ENCODE measurements at regions of chr1 and their contacts with region 1.

Region 1: GRCh38 chr1:149886396-149887195 is 12.8 kb upstream of the BOLA1 start:
- H3K4me3 ChIP-seq: peak overlapping the region; percentile 64
- H3K27ac ChIP-seq: peak overlapping the region; percentile 68
- H3K4me1 ChIP-seq: 0 out of 2 replicates have a peak, but pooled peaks cover 2% of the 10 kb centered on the region
- CTCF ChIP-seq: no peak

Region 2: GRCh38 chr1:149899460-149900293 is 13.1 kb after region 1 on chr1 and contains the start of gene BOLA1:
- CTCF ChIA-PET with region 1: interaction called, 3 read pairs
- POLR2A ChIA-PET with region 1: interaction called, 10 read pairs
- H3K4me3 ChIP-seq: peak within 1 kb of the TSS; percentile 49
- H3K27ac ChIP-seq: peak within 1 kb of the TSS; percentile 44; the same call in 1 of the 2 replicates
- H3K4me1 ChIP-seq: no peaks in the 10 kb centered on the region
- CTCF ChIP-seq: no peak

Region 3: GRCh38 chr1:149927503-149928387 is 41.1 kb after region 1 on chr1 and contains the start of gene SF3B4:
- CTCF ChIA-PET with region 1: interaction called, 4 read pairs
- POLR2A ChIA-PET with region 1: interaction called, 30 read pairs
- H3K4me3 ChIP-seq: peak within 1 kb of the TSS; percentile 64
- H3K27ac ChIP-seq: peak within 1 kb of the TSS; percentile 78
- H3K4me1 ChIP-seq: 0 out of 2 replicates have a peak, but pooled peaks cover 2% of the 10 kb centered on the region
- CTCF ChIP-seq: no peak

Region 4: GRCh38 chr1:150010393-150011115 is 124.0 kb after region 1 on chr1 and contains the start of gene OTUD7B:
- CTCF ChIA-PET with region 1: interaction called, 6 read pairs
- POLR2A ChIA-PET with region 1: interaction called, 12 read pairs
- H3K4me3 ChIP-seq: peak within 1 kb of the TSS; percentile 88
- H3K27ac ChIP-seq: peak within 1 kb of the TSS; percentile 84
- H3K4me1 ChIP-seq: peaks cover 5% of the 10 kb centered on the region
- CTCF ChIP-seq: peak; percentile 66; the same call in 1 of the 2 replicates

Region 5: DNA sequence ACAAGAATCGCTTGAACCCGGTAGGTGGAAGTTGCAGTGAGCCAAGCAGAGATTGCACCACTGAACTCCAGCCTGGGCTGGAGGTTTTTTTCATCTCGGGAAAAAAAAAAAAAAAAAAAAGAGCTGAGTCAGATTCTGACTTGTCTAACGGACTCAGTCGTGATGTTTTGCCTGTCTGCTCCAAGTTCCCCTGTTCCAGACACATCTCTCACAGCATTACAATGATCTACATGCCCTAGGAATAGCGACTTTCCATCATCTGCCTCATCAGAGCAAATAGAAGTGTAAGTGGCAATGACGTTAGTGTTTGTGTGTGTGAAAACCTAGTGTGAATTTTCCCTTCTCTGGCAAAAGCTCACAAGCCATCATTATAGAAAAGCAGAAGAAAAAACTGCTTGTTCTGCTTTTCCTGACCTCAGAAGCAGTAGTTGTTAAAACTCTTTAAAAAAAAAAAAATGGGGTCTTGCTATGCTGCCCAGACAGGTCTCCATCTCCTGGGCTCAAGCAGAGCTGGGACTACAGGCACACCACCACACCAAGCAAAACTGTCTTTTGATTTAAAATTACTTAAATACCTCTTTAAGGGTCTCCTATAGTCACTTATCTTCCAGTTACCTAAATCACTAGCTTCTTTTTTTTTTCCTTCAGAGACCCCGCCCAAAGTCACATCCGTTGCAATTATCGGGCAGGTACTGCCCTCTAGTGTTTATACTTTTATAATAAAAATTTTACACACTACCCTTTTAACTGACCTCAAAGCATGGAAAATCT is 300.4 kb after region 1 on chr1:
- CTCF ChIA-PET with region 1: interaction called, 14 read pairs
- POLR2A ChIA-PET with region 1: interaction called, 15 read pairs
- H3K4me3 ChIP-seq: no peak overlapping the region
- H3K27ac ChIP-seq: no peak overlapping the region
- H3K4me1 ChIP-seq: peaks cover 3% of the 10 kb centered on the region; the same call in 1 of the 2 replicates
- CTCF ChIP-seq: peak; percentile 27; the same call in 1 of the 2 replicates

Measured in HEK293 (cell line).